Motor neuron (in vitro differentiated cells): ENCODE measurements at regions of chr9 and their contacts with region 1.

Region 1: GRCh38 chr9:69971643-69972449 is 71.8 kb upstream of the MAMDC2 start:
- ATAC-seq: peak; percentile 45 to 96 (median 72)
- H3K4me3 ChIP-seq: no peak overlapping the region
- H3K27ac ChIP-seq: no peak overlapping the region
- H3K4me1 ChIP-seq: no peaks in the 10 kb centered on the region

Region 2: DNA sequence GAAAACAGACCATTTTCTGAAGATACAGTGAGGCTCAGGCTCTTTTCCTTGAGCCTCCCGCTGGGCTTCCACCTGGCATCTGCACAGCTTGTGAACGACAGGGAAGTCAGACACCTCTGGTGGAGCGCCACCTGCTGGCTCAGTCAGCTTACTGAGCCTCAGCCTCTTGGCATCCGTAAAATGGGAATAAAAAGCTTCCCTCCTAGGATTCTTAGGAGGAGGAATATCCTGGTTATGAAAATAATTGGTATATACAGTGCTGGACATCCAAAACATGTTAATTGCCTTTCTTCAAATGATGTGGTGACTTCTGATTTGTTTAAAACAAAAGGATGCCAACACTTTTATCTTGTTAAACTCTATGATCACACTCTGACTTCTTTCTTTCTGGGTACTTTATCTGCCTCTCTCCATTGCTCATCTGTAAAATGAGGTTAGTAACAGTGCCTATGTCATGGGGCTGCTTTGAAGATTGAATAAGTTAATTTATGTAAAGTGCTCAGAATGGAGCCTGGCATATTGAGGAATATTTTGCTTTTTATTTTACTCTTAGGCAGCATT is 139.3 kb after region 1 on chr9:
- in situ Hi-C with region 1: loop called in 5 of 9 experiments (anchors 10 to 25 kb)
- ATAC-seq: peak; percentile 45 to 71 (median 58)
- H3K4me3 ChIP-seq: no peak overlapping the region
- H3K27ac ChIP-seq: no peak overlapping the region
- H3K4me1 ChIP-seq: no peaks in the 10 kb centered on the region

Region 3: DNA sequence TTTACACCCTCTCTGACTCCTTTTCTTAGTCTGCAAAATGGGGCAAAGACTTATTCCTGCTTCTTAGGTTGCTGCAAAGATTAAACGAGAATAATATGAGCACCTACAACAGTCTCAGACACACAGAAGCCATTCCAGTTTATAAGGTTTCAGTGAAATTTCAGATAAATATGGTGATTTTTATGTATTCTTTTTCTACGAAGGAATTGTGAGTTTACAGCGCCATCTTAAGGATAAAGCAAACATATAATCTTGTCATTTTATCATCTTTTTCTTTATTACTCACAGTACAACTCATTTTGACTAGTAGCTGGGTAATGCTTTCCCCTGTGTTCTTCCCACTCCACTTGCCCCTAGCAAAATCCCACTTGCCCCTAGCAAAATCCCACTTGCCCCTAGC is 257.7 kb after region 1 on chr9:
- in situ Hi-C with region 1: loop called in 1 of 9 experiments (anchors 25 kb)
- ATAC-seq: peak in 2 of 8 experiments; percentile 32 to 36
- H3K4me3 ChIP-seq: no peak overlapping the region
- H3K27ac ChIP-seq: no peak overlapping the region
- H3K4me1 ChIP-seq: peaks cover 0 to 4% of the 10 kb centered on the region in 2 donors

Region 4: DNA sequence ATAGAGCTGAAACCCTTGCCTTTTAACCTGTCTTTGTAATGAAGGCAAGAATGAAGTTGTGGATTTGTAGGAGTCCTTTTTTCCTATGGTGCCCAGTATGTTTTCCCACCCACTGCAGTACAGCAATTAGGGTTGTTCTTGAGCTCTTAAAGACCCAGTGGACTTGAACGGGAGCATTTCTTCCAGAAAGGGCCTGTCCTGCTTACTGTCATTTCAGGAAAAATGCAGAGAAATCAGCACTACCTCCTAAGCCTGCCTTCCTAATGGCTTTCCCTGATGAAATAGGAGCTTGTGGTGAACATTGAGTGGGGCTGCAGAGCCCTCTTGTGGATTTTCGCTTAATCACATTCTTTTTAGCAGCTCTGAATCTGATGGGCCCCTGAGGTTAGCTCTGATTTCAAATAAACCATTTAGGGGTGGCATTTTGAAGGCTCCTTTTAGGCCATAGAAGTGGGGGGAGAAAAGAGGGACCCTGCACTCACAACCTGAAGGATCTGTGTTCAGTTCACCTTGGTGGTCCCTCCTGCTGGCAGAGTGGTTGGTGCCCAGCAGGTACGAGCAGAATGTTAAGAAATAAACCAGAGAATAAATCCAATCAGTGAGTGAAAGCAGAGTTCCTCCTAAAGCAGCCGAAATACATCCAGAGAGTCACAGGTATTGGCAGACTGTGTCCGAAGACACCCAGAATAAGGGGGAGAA is 630.6 kb after region 1 on chr9:
- in situ Hi-C with region 1: loop called in 2 of 9 experiments (anchors 25 kb)
- ATAC-seq: peak; percentile 14 to 88 (median 79)
- H3K4me3 ChIP-seq: no peak overlapping the region
- H3K27ac ChIP-seq: no peak overlapping the region
- H3K4me1 ChIP-seq: peaks cover 9 to 12% of the 10 kb centered on the region in 2 donors

Region 5: DNA sequence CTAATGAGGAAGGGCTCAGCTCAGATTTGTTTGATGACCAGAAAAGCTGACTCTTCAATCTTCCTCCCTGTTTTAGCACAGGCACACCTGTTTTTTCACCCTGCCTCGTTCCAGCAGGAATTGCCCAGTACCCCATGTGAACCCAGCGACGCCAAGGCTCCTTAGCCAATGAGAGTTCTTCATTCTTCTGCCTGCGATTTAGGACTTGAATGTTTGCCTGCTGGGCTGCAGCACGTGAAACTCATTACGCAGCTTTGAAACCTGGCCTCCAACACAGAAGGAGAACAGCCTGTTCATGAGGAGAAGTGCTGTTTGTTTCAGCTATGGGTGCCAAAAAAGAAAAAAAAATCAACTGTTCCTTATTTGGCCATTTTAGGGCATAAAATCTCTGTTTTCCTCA is 834.1 kb after region 1 on chr9:
- in situ Hi-C with region 1: no loop called
- ATAC-seq: peak in 1 of 8 experiments; percentile 45
- H3K4me3 ChIP-seq: no peak overlapping the region
- H3K27ac ChIP-seq: no peak overlapping the region
- H3K4me1 ChIP-seq: peaks cover 0 to 8% of the 10 kb centered on the region in 2 donors